Left ventricle myocardium inferior (tissue), 1 donor: ENCODE measurements at regions of chrX and their contacts with region 1.

Region 1: GRCh38 chrX:70196961-70197805 is 19.9 kb downstream of the DGAT2L6 start:
- DNase-seq: peak; percentile 11
- H3K4me3 ChIP-seq: no peak overlapping the region
- H3K27ac ChIP-seq: no peak overlapping the region
- H3K4me1 ChIP-seq: no peaks in the 10 kb centered on the region
- H3K27me3 ChIP-seq: no peaks in the 10 kb centered on the region
- CTCF ChIP-seq: peak; percentile 68

Region 2: DNA sequence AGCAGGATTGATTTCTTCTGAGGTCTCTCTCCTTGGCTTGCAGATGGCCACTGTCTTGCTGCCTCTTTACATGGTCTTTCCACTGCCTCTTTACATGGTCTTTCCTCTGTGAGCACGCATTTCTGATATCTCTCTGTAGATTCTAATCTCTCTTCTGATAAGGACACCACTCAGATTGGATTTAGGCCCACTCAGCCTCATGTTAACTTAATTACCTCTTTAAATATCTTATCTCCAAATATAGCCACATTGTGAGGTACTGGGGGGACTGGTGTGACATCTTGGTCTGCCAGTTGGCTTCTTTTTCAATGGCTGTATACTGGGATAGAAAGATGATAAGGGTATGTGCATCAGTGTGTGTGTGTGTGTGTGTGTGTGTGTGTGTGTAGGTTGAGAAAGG is 301.1 kb before region 1 on chrX:
- intact Hi-C with region 1: no loop called
- DNase-seq: no peak
- H3K4me3 ChIP-seq: no peak overlapping the region
- H3K27ac ChIP-seq: no peak overlapping the region
- H3K4me1 ChIP-seq: no peaks in the 10 kb centered on the region
- H3K27me3 ChIP-seq: no peaks in the 10 kb centered on the region
- CTCF ChIP-seq: no peak

Region 3: DNA sequence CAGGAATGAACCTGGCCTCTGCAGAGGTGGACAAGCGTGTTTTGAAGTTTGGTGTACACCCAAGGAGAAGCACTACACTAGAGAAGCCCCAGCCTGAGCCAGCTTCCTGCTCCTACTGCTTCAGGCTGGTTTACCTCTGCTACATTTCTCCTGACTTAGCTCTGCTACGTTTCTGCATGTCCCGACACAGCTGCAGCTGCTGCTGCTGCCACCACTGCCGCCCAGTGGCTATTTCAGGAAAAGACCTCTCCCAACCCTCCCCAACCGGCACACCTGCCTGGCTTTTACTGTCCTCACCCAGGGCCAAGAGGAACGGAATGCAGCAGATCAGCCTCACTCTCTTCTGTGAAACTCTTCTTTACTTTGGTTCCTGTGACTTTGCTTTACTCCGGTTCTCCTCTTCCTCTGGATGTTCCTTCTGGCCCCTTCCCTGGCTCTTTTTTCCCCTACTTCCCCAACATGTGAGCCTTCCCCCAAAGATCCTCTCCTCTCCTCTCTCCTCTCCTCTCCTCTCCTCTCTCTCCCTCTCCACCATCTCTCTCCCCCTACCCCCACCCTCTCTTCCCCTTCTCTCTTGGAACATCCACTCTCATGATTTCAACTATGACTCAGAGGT is 65.9 kb after region 1 on chrX:
- intact Hi-C with region 1: loop called (anchors 5 kb)
- DNase-seq: peak; percentile 18
- H3K4me3 ChIP-seq: no peak overlapping the region
- H3K27ac ChIP-seq: no peak overlapping the region
- H3K4me1 ChIP-seq: no peaks in the 10 kb centered on the region
- H3K27me3 ChIP-seq: no peaks in the 10 kb centered on the region
- CTCF ChIP-seq: peak; percentile 59